Lower lobe of right lung (tissue), 2 donors: ENCODE measurements at regions of chr1 and their contacts with region 1.

Region 1: GRCh38 chr1:26787706-26788514 is at the start of gene PIGV:
- DNase-seq: peak; percentile 91
- ATAC-seq: peak; percentile 94 to 95
- H3K4me3 ChIP-seq: peak within 1 kb of the TSS; percentile 90
- H3K27ac ChIP-seq: peak within 1 kb of the TSS; percentile 98
- H3K4me1 ChIP-seq: peaks cover 54% of the 10 kb centered on the region
- H3K27me3 ChIP-seq: no peaks in the 10 kb centered on the region
- CTCF ChIP-seq: peak; percentile 22
- total RNA-seq, gene PIGV: 20.3 TPM

Region 2: GRCh38 chr1:26608895-26609294 is 179.0 kb before region 1 on chr1:
- intact Hi-C with region 1: loop called (anchors 5 kb)
- DNase-seq: no peak
- ATAC-seq: no peak
- H3K4me3 ChIP-seq: no peak overlapping the region
- H3K27ac ChIP-seq: no peak overlapping the region
- H3K4me1 ChIP-seq: no peaks in the 10 kb centered on the region
- H3K27me3 ChIP-seq: no peaks in the 10 kb centered on the region
- CTCF ChIP-seq: no peak

Region 3: GRCh38 chr1:26695356-26696118 is 92.4 kb before region 1 on chr1 and contains the start of gene ARID1A:
- intact Hi-C with region 1: loop called (anchors 10 kb)
- DNase-seq: peak; percentile 98
- ATAC-seq: peak; percentile 82 to 93
- H3K4me3 ChIP-seq: peak within 1 kb of the TSS; percentile 83
- H3K27ac ChIP-seq: peak within 1 kb of the TSS; percentile 95
- H3K4me1 ChIP-seq: peaks cover 57% of the 10 kb centered on the region
- H3K27me3 ChIP-seq: no peaks in the 10 kb centered on the region
- CTCF ChIP-seq: peak; percentile 18
- total RNA-seq, gene ARID1A: 72.4 TPM